Panc1 (cell line): ENCODE measurements at regions of chr11 and their contacts with region 1.

Region 1: GRCh38 chr11:9351321-9351881 is 33.1 kb upstream of the IPO7 start:
- DNase-seq: no peak
- ATAC-seq: no peak
- H3K4me3 ChIP-seq: no peak overlapping the region
- H3K27ac ChIP-seq: no peak overlapping the region
- H3K4me1 ChIP-seq: 0 out of 2 replicates have a peak, but pooled peaks cover 3% of the 10 kb centered on the region
- H3K27me3 ChIP-seq: no peaks in the 10 kb centered on the region
- CTCF ChIP-seq: no peak

Region 2: DNA sequence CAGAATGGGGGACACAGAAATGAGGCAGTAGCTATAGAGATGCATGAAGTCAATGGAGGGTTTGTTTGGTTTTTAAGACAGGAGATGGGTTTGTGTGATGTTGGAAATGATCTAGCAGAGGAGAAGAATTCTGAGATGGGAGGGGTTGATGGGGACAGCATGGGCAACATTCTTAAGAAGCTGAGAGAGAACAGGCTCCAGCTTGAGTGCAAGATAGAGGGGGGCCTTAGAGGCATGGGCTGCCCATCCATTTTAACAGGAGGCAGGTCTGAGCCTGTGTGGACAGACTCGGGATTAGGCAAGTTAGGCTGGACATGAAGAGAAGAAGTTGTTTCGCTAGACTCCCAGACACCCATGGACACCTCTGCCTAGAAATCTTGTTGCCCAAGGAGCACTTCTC is 309.7 kb before region 1 on chr11:
- CTCF ChIA-PET with region 1: interaction called, 13 read pairs
- POLR2A ChIA-PET with region 1: no interaction called
- in situ Hi-C with region 1: no loop called
- intact Hi-C with region 1: no loop called
- DNase-seq: no peak
- ATAC-seq: no peak
- H3K4me3 ChIP-seq: no peak overlapping the region
- H3K27ac ChIP-seq: no peak overlapping the region
- H3K4me1 ChIP-seq: no peaks in the 10 kb centered on the region
- H3K27me3 ChIP-seq: no peaks in the 10 kb centered on the region
- CTCF ChIP-seq: no peak

Region 3: DNA sequence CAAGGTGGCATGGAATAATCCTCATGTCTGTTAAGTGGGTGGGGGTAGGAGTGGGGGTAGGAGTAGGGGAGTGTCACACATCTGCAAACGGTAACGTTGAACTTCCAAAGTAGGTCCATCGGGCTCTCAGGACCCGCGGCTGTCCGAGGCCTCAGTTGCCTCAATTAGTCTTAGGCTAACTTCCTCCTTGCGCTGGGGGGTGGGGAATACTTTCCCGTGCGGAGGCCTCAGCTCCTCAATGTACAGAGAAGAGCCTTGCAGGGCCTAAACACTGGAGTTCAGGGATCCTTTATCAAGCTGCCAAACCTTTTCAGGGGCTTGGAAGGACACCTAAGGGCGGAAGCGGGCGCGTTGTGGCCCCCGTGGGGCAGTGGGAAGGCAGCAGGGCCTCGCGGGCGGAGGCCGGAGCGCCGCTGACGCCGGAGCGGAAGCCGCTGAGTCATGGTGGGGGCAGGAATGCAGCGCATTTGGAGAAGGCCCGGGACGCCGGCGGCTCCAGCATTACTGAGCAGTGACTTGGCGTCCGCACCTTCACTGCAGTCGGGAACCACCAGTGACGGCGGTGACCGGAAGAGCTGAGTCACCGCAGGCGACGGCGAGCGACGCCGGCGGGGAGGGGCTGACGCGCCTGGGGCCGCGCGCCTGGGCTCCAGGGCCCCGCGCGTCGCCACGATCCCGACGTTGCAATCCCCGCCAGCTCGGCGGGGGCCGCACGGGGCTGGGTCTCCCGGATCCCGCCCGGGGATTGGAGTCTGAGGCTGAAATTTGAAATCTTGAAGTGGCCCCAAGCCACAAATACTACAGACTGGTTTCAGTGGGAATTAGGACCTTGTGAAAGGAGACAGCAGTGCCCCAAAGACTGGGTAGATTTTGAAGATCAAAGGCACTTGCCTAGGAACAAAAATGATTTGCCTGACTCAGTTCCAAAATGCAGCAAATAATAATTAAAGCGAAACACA is 12.8 kb after region 1 on chr11:
- CTCF ChIA-PET with region 1: interaction called, 12 read pairs
- POLR2A ChIA-PET with region 1: interaction called, 18 read pairs
- in situ Hi-C with region 1: no loop called
- intact Hi-C with region 1: no loop called
- DNase-seq: peak; percentile 95
- ATAC-seq: peak; percentile 98
- H3K4me3 ChIP-seq: peak overlapping the region; percentile 29 to 63
- H3K27ac ChIP-seq: peak overlapping the region; percentile 84
- H3K4me1 ChIP-seq: peaks cover 34% of the 10 kb centered on the region
- H3K27me3 ChIP-seq: no peaks in the 10 kb centered on the region
- CTCF ChIP-seq: no peak